AG04450 (cell line): ENCODE measurements at regions of chr3 and their contacts with region 1.

Region 1: DNA sequence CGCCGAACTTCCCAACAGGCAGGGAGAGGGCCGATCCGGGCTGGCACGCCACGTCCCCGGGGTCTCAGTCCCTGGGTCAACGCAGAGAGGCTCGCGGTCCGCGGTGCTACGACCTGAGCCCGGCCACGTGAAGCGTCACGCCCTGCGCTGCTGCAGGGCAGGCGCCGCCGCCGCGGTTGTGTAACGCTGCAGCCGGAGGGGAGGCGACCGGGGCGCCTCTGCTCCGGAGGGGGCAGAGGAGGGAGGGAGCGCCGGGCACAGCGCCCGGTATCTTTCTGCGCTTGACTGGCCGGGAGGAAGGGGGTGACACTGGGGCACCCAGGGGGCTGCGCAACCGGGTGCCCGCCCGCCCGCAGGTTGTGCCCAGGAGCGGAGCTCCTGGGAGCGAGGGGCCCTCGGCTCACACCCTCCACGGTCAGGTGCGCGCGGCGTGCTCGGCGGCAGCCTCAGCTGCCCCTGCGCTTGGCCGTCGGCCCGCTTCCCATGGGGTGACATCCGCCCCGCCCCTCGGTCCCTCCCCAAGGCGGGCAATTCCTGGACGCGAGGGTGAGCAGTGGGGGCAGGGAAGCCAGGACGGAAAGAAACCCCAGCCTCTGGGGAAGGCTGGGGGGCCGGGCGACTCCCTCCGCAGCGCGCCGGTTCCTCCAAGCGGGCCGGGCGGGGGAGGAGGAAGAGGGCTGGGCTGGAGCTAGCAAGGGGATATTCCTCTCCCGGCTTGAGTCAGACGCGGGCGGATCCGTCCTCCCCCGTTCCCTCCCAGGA is 852 bp upstream of the BHLHE40 start:
- DNase-seq: peak; percentile 92
- H3K4me3 ChIP-seq: peak overlapping the region; percentile 92
- H3K27ac ChIP-seq: peak overlapping the region; percentile 93
- H3K27me3 ChIP-seq: no peaks in the 10 kb centered on the region
- CTCF ChIP-seq: no peak

Region 2: DNA sequence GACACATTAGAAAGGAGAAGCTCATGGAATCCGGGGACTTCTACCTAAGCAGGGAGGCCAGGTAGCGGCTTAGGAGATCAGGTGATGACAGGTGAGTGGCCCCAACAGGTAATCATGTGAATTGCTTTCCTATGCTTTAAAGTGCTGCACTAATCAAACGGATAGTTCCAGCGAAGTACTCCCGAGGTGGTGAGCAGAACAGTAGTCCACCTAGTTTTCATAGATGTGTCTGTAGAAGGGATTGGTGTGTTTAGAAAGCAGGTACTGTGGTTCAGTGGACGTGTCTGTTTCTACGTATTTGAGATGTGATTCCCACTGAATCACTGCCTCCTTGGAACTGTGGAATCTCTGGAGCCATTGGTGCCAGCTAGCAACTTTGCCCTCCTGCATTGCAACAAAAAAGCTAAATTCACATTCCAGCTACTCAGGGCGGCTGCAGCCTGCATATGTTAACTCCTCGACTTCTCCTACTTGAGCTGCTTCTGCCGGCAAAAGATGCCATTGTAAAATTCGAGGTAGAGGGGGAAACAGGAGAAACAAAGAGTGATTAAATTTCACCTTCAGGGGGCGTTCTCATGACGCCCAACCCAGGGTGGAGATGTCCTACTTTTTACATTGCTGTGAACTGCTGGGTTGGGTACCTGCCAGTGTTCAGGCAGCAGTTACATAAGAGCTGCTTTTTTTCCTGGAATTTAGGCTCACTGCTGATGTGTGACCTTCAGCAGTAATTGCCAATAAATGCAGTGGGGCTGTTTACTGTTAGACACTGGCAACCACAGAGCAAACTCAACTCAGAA is 257.9 kb before region 1 on chr3:
- CTCF ChIA-PET with region 1: interaction called, 129 read pairs
- POLR2A ChIA-PET with region 1: interaction called, 7 read pairs
- DNase-seq: no peak
- H3K4me3 ChIP-seq: no peak overlapping the region
- H3K27ac ChIP-seq: no peak overlapping the region
- H3K27me3 ChIP-seq: no peaks in the 10 kb centered on the region
- CTCF ChIP-seq: peak; percentile 25; the same call in 1 of the 2 replicates